ENCODE measurements at regions of chr10 and their contacts with region 1.

Region 1: GRCh38 chr10:22244001-22244400 is 26.2 kb upstream of the EBLN1 start:
- DNase-seq: no peak
- H3K4me3 Mint-ChIP-seq: no peak overlapping the region
- H3K27ac Mint-ChIP-seq: no peak overlapping the region
- H3K4me1 Mint-ChIP-seq: peaks cover 35% of the 10 kb centered on the region
- H3K27me3 Mint-ChIP-seq: peaks cover 2% of the 10 kb centered on the region

Region 2: GRCh38 chr10:22222236-22223190 is 21.5 kb before region 1 on chr10:
- intact Hi-C with region 1: loop called (anchors 1 kb)
- DNase-seq: peak; percentile 67
- H3K4me3 Mint-ChIP-seq: no peak overlapping the region
- H3K27ac Mint-ChIP-seq: peak overlapping the region; percentile 48
- H3K4me1 Mint-ChIP-seq: peaks cover 14% of the 10 kb centered on the region
- H3K27me3 Mint-ChIP-seq: no peaks in the 10 kb centered on the region

Region 3: GRCh38 chr10:22228943-22229801 is 14.8 kb before region 1 on chr10:
- intact Hi-C with region 1: loop called (anchors 1 kb)
- DNase-seq: peak; percentile 96
- H3K4me3 Mint-ChIP-seq: peak overlapping the region; percentile 84
- H3K27ac Mint-ChIP-seq: peak overlapping the region; percentile 92
- H3K4me1 Mint-ChIP-seq: peaks cover 21% of the 10 kb centered on the region
- H3K27me3 Mint-ChIP-seq: peaks cover 14% of the 10 kb centered on the region

Region 4: DNA sequence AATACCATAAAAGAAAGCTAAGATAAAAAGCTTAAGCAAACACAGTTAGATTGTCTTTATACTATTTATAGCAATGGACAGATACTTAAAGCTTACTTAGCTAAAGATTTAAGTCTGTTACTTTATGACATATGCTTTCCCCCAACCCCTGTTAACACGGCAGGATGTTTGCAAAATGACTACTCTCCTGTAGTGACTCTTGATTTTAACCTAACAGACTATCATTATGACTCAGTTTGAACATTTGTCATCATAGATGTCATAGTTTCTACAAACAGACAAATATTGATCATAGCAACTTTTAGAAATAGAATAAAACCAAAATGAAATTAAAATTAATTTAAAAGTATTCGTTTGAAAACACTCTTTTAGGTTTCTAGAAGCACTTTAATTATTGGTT is 64.4 kb after region 1 on chr10:
- intact Hi-C with region 1: loop called (anchors 1 kb)
- DNase-seq: peak; percentile 79
- H3K4me3 Mint-ChIP-seq: no peak overlapping the region
- H3K27ac Mint-ChIP-seq: no peak overlapping the region
- H3K4me1 Mint-ChIP-seq: peaks cover 10% of the 10 kb centered on the region
- H3K27me3 Mint-ChIP-seq: peaks cover 2% of the 10 kb centered on the region

Region 5: GRCh38 chr10:22365644-22366565 is 121.9 kb after region 1 on chr10:
- intact Hi-C with region 1: loop called (anchors 1 kb)
- DNase-seq: no peak
- H3K4me3 Mint-ChIP-seq: no peak overlapping the region
- H3K27ac Mint-ChIP-seq: peak overlapping the region; percentile 67
- H3K4me1 Mint-ChIP-seq: peaks cover 36% of the 10 kb centered on the region
- H3K27me3 Mint-ChIP-seq: no peaks in the 10 kb centered on the region

Region 6: DNA sequence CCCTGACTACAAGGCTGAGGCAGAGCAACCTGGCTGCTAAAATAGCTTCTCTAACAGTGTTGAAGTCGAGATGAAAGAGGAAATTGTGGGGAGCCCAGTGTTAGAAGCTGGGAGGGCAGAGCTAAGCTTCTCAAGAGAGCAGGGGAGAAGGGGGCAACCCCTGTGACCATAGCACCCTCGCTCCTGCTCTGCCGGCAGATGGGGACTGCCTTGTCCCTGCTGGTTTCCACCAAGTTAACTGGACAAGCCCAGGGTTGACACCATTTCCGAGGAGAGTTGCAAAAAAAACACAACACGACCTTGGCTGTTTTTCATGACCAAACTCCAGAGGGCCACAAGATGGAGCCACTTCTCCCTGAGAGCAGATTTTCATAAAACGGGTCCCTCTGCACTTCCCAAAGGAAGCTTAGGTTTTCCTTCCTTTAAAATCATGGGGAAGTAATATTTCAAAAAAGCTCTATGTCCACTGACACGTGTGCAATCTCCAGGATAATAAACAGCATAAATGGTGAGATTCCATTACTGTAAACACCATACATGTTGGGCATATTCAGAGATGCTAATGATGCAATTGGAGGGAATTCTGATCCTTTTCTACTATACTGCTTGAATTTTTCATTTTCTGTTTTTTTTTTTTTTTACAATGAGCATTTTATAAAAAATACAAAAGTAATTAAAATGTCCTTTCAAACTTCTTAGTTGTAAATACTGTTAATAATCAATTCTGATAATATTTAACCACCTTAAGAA is 330.0 kb after region 1 on chr10:
- intact Hi-C with region 1: loop called (anchors 10 kb)
- DNase-seq: no peak
- H3K4me3 Mint-ChIP-seq: no peak overlapping the region
- H3K27ac Mint-ChIP-seq: no peak overlapping the region
- H3K4me1 Mint-ChIP-seq: peaks cover 36% of the 10 kb centered on the region
- H3K27me3 Mint-ChIP-seq: no peaks in the 10 kb centered on the region

Measured in activated CD4-positive, alpha-beta T cell treated with anti-CD3 and anti-CD28 coated beads, Interleukin-2, amount 10 ng/mL, durations not matched to agents 24 days and 14 days (primary cell).